Head of caudate nucleus (tissue), 42 donors: ENCODE measurements at regions of chr6 and their contacts with region 1.

Region 1: DNA sequence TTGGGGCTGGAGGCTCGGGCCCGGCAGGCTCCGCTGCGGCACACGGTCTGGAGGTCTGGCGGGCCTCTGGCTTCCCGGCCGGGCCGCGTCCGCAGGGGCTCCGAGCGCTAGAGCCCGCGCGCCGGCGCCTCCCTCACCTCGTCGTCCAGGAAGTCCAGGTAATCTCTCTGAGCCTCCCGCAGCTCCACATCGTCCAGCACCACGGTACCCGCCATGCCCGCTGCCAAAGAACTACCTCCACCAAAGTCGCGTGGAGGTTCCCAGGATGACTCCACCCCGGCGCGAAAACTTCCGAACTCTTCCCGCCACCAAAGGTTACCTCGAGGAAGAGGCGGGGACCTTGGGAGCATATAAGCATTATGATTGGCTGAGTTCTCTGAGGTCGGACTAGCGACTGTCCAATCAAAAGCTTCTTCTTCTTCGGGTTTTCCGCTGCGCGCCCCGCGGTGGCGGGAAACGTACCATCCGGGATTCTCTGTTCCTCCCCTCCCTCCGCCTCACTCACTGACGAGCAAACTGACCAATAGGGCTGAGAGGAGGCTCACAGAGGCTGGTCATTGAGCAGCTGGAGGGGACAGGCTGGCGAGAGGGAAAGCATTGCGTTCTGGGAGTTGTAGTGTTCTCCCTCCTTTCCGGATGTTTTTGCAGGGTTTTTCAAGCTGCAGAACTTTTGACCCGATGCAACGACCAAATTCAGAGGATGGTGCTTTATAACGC is at the start of gene MCM3:
- DNase-seq: peak; percentile 95 to 100 (median 98)

Region 2: GRCh38 chr6:52361945-52362442 is 77.4 kb after region 1 on chr6 and contains the start of gene PAQR8:
- intact Hi-C with region 1: loop called (anchors 2 kb)
- DNase-seq: peak; percentile 40 to 93 (median 87)

Region 3: DNA sequence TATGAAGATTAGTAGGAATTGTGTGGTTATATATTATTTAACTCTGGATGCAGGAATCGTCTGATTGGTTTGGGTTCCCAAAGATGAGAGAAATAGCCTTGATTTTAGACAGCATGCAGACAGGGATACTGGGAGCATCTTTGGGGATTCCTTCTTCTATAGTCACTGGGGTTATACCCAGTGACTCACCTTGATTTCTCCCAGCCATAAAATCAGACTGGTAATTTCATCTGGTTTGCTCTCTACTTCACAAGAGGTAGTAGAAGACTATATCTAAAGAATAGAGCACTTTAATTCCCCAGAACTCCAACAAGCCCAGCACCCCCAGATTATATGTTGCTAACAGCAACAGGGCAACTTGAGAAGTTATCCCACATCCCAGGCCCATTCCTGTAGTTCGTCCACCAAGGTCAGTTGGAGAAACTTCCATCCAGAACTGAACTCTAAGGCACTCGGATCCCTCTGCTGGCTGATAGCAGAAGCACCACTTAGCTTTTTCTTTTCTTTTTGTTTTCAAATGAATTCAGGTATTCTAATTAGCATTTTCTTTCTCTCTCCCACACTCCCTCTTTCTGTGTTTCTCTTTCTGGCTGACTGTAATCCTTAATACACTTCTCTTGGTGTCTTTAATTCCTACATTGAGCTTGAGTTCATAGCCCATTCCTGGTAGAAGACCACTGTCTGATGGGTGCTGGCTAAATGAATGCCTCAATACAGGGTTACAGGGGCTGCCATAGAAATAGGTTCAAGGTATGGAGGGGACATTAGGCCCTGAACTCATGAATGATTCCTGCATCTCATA is 115.1 kb after region 1 on chr6:
- intact Hi-C with region 1: loop called (anchors 2 kb)
- DNase-seq: peak in 30 of 42 donors; percentile 19 to 82 (median 56)

Region 4: DNA sequence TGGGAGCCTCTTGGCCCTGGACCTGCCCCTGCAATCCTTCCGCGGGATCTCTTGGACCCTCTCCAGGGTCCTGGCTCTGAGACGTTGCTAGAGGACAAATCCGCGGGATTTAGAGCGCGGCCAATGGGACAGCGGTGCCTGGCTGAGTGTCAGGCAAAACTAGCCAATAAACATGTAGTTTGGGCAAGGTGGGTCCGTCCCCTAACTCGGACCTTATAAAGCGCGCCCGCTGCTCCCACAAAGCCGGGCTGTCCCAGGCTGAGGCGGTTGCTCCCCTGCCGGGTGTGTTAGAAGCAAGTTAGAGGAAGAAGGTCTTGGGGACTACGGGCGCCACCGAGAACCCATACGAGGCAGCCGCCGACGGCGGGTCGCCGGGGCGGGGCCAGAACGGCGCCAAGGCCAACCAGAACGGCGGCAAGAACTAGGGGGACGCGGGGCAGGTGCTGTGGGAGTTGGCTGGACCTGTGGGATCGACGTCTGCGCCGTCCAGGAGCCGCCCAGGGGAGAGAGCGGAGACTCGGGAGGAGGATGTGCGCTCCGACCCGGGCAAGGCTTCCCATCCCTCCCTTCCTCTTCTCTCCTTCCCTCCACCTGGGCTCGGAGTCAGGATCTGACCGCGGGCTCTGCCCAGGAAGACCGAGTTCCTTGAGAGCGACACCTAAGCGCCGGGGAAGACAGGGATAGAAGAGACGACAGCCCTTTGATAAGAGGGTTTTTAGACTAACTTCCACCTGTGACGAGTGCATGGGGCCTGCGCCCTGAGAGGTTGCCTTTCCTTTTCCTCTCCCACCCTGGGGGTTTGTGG is 379.8 kb after region 1 on chr6:
- intact Hi-C with region 1: loop called (anchors 10 kb)
- DNase-seq: peak; percentile 74 to 93 (median 85)